ENCODE measurements at regions of chr19 and their contacts with region 1.

Region 1: DNA sequence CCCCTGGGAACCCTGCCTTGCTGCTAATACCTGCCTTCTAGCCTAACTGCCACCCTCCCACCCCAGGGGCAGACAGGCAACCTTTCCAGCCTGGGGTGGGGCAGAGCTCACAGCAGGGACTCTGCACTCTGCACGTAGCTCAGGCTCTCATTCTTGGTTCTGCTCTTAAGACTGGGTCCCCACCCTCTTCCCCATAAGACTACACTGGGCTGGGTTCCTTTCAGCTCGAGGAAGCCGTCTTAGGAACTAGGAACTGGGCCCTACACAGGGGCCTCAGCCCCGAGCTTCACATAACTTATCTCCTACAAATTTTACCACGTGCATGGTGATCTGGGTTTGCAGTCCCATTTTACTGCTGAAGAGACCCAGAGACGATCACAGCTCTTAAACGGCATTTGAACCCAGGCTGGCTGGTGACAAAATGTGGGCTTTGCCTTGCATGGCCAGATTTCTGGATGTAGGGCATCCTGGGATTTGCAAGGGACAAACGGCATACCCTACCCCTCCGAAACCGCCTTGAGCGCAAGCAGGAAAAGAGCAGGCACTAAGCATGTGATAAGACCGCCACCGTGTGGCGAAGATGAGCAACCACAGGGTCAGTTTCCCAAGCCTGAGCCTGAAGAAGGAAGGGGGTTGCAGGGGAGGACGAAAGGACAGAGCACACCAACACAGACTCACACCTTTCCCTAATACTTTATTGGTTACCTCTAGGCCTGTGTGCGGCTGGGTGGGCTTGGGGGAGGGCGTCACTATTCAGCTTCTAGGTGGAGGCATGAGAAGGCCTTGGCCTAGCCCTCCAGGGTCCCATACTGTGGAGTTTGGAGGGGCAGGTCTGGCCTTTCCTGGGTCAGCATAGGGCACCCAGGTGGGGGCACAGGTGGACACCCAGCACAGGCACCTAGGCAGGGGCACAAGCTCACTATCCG is 5.1 kb downstream of the JUNB start:
- DNase-seq: peak in 13 of 14 experiments; percentile 65 to 90 (median 70)
- ATAC-seq: peak; percentile 7
- H3K4me3 ChIP-seq: peak overlapping the region; percentile 37
- H3K4me3 Mint-ChIP-seq: peak overlapping the region; percentile 82
- H3K27ac ChIP-seq: peak overlapping the region; percentile 54 to 55
- H3K27ac Mint-ChIP-seq: peak overlapping the region; percentile 82
- H3K4me1 ChIP-seq: peaks cover 52% of the 10 kb centered on the region
- H3K4me1 Mint-ChIP-seq: peaks cover 36% of the 10 kb centered on the region
- H3K27me3 ChIP-seq: no peaks in the 10 kb centered on the region
- H3K27me3 Mint-ChIP-seq: peaks cover 10% of the 10 kb centered on the region
- CTCF ChIP-seq: peak; percentile 94

Region 2: GRCh38 chr19:12325690-12326089 is 470.7 kb before region 1 on chr19:
- CTCF ChIA-PET with region 1: no interaction called
- POLR2A ChIA-PET with region 1: no interaction called
- intact Hi-C with region 1: no loop called
- DNase-seq: no peak
- ATAC-seq: no peak
- H3K4me3 ChIP-seq: no peak overlapping the region
- H3K4me3 Mint-ChIP-seq: no peak overlapping the region
- H3K27ac ChIP-seq: no peak overlapping the region
- H3K27ac Mint-ChIP-seq: no peak overlapping the region
- H3K4me1 ChIP-seq: no peaks in the 10 kb centered on the region
- H3K4me1 Mint-ChIP-seq: peaks cover 38% of the 10 kb centered on the region
- H3K27me3 ChIP-seq: no peaks in the 10 kb centered on the region
- H3K27me3 Mint-ChIP-seq: no peaks in the 10 kb centered on the region
- CTCF ChIP-seq: no peak

Region 3: DNA sequence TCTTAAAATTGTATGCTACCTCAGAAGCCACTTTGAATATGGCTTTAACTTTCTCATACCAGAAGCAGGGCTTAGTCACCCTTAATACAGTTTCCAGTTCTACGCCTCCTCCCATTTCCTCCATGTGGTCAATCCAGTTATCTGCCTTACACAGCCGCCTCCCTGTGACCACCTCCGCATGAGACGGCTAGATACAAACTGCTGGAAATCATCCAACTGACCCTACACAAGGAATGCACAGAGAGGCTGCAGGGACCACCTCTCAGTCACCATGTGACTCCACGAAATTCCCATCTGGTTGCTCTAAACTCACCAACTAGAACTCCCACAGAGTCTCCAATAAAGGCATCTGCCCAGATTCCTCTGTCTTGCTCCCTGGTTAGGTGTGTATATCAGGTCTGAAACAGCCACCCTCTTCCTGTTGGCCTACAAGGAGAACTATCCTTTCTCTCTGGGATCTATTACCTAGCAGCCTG is 252.0 kb before region 1 on chr19:
- CTCF ChIA-PET with region 1: no interaction called
- POLR2A ChIA-PET with region 1: no interaction called
- intact Hi-C with region 1: no loop called
- DNase-seq: no peak
- ATAC-seq: no peak
- H3K4me3 ChIP-seq: no peak overlapping the region
- H3K4me3 Mint-ChIP-seq: no peak overlapping the region
- H3K27ac ChIP-seq: no peak overlapping the region
- H3K27ac Mint-ChIP-seq: peak overlapping the region; percentile 61
- H3K4me1 ChIP-seq: peaks cover 24% of the 10 kb centered on the region
- H3K4me1 Mint-ChIP-seq: peaks cover 50% of the 10 kb centered on the region
- H3K27me3 ChIP-seq: no peaks in the 10 kb centered on the region
- H3K27me3 Mint-ChIP-seq: no peaks in the 10 kb centered on the region
- CTCF ChIP-seq: no peak

Region 4: GRCh38 chr19:12681074-12681951 is 115.1 kb before region 1 on chr19 and contains the start of gene DHPS:
- CTCF ChIA-PET with region 1: no interaction called
- POLR2A ChIA-PET with region 1: interaction called, 9 read pairs
- intact Hi-C with region 1: loop called in 1 of 2 experiments (anchors 5 kb)
- DNase-seq: peak; percentile 76 to 99 (median 88)
- ATAC-seq: peak; percentile 78
- H3K4me3 ChIP-seq: peak within 1 kb of the TSS; percentile 93
- H3K4me3 Mint-ChIP-seq: peak within 1 kb of the TSS; percentile 94
- H3K27ac ChIP-seq: peak within 1 kb of the TSS; percentile 94 to 98
- H3K27ac Mint-ChIP-seq: peak within 1 kb of the TSS; percentile 86
- H3K4me1 ChIP-seq: peaks cover 40% of the 10 kb centered on the region
- H3K4me1 Mint-ChIP-seq: peaks cover 32% of the 10 kb centered on the region
- H3K27me3 ChIP-seq: no peaks in the 10 kb centered on the region
- H3K27me3 Mint-ChIP-seq: no peaks in the 10 kb centered on the region
- CTCF ChIP-seq: no peak
- total RNA-seq, gene DHPS: 112 to 113 TPM

Region 5: GRCh38 chr19:12757544-12758274 is 38.7 kb before region 1 on chr19:
- CTCF ChIA-PET with region 1: interaction called, 14 read pairs
- POLR2A ChIA-PET with region 1: interaction called, 6 read pairs
- intact Hi-C with region 1: loop called in 1 of 2 experiments (anchors 1 kb)
- DNase-seq: peak in 13 of 14 experiments; percentile 38 to 81 (median 53)
- ATAC-seq: peak; percentile 76
- H3K4me3 ChIP-seq: no peak overlapping the region
- H3K4me3 Mint-ChIP-seq: no peak overlapping the region
- H3K27ac ChIP-seq: no peak overlapping the region
- H3K27ac Mint-ChIP-seq: no peak overlapping the region
- H3K4me1 ChIP-seq: peaks cover 14% of the 10 kb centered on the region
- H3K4me1 Mint-ChIP-seq: no peaks in the 10 kb centered on the region
- H3K27me3 ChIP-seq: peaks cover 11% of the 10 kb centered on the region in 2 experiments
- H3K27me3 Mint-ChIP-seq: peaks cover 25% of the 10 kb centered on the region
- CTCF ChIP-seq: peak; percentile 86

Region 6: GRCh38 chr19:12777217-12778016 is 19.0 kb before region 1 on chr19:
- CTCF ChIA-PET with region 1: interaction called, 178 read pairs
- POLR2A ChIA-PET with region 1: interaction called, 348 read pairs
- intact Hi-C with region 1: loop called (anchors 1 kb)
- DNase-seq: peak; percentile 67 to 91 (median 78)
- ATAC-seq: peak; percentile 4
- H3K4me3 ChIP-seq: peak overlapping the region; percentile 84
- H3K4me3 Mint-ChIP-seq: peak overlapping the region; percentile 90
- H3K27ac ChIP-seq: peak overlapping the region; percentile 82 to 85
- H3K27ac Mint-ChIP-seq: peak overlapping the region; percentile 94
- H3K4me1 ChIP-seq: peaks cover 63% of the 10 kb centered on the region
- H3K4me1 Mint-ChIP-seq: peaks cover 47% of the 10 kb centered on the region
- H3K27me3 ChIP-seq: no peaks in the 10 kb centered on the region
- H3K27me3 Mint-ChIP-seq: no peaks in the 10 kb centered on the region
- CTCF ChIP-seq: peak; percentile 97

Region 7: DNA sequence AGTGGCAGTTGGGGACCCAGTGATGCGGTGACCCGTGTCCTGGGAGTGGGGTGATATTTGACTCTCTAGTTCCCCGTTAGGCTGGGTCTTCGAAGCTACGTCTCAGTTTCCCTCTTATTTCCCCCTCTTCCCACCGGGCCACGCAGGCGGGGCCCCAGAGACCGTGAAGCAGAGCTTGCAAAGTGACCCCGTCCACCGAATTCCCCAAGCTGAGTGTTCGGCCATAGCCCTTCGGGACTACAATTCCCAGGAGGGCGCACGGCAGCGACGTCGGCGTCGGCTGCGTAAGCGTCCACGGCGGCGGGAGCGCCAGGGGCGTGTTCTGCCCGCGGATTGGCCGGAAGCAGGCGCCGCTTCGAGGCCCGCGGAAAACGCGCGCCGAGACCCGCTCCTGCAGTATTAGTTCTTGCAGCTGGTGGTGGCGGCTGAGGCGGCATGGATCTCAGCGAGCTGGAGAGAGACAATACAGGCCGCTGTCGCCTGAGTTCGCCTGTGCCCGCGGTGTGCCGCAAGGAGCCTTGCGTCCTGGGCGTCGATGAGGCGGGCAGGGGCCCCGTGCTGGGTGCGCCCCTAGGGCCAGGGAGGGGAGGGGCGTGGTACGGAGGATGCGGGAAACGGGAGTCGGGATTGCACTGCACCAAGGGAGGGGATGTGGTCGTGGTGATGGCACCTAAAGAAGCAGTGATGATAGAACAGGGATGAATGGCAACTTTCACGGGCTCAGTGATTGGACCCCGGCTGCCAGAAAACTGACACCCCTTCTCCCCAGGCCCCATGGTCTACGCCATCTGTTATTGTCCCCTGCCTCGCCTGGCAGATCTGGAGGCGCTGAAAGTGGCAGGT is 10.1 kb after region 1 on chr19 and contains the start of gene RNASEH2A:
- CTCF ChIA-PET with region 1: interaction called, 11 read pairs
- POLR2A ChIA-PET with region 1: interaction called, 40 read pairs
- intact Hi-C with region 1: loop called in 1 of 2 experiments (anchors 1 kb)
- DNase-seq: peak; percentile 73 to 94 (median 84)
- ATAC-seq: peak; percentile 91
- H3K4me3 ChIP-seq: peak within 1 kb of the TSS; percentile 64
- H3K4me3 Mint-ChIP-seq: peak within 1 kb of the TSS; percentile 96
- H3K27ac ChIP-seq: peak within 1 kb of the TSS in 1 of 2 donors; percentile 23
- H3K27ac Mint-ChIP-seq: peak within 1 kb of the TSS; percentile 88
- H3K4me1 ChIP-seq: peaks cover 26% of the 10 kb centered on the region
- H3K4me1 Mint-ChIP-seq: peaks cover 21% of the 10 kb centered on the region
- H3K27me3 ChIP-seq: no peaks in the 10 kb centered on the region
- H3K27me3 Mint-ChIP-seq: no peaks in the 10 kb centered on the region
- CTCF ChIP-seq: no peak
- total RNA-seq, gene RNASEH2A: 1.5 to 2.7 TPM

Measured in CD4-positive, alpha-beta T cell (primary cell).